ENCODE measurements at regions of chr7 and their contacts with region 1.

Region 1: GRCh38 chr7:75795831-75796285 is 17.7 kb downstream of the CCL24 start:
- DNase-seq: no peak
- ATAC-seq: no peak
- H3K4me3 Mint-ChIP-seq: no peak overlapping the region
- H3K27ac Mint-ChIP-seq: no peak overlapping the region
- H3K4me1 Mint-ChIP-seq: no peaks in the 10 kb centered on the region
- H3K27me3 Mint-ChIP-seq: peaks cover 2% of the 10 kb centered on the region

Region 2: DNA sequence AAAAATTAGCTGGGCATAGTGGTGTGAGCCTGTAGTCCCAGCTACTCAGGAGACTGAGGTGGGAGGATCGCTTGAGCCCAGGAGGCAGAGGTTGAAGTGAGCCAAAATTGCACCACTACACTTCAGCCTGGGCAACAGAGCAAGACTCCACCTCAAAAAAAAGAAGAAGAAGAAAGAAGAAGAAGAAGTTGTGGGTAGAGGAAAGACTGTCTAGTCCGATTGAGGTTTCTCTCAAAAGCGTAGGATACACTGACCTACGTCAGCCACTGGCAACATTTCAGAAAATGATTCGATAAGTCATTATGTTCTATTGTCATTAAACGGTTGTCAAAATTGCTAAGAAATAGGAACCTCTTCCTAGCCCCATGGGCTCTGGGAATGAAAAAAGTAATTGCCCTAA is 60.7 kb after region 1 on chr7:
- CTCF ChIA-PET with region 1: no interaction called
- POLR2A ChIA-PET with region 1: no interaction called
- intact Hi-C with region 1: loop called in 1 of 2 experiments (anchors 5 kb)
- DNase-seq: no peak
- ATAC-seq: no peak
- H3K4me3 Mint-ChIP-seq: no peak overlapping the region
- H3K27ac Mint-ChIP-seq: no peak overlapping the region
- H3K4me1 Mint-ChIP-seq: peaks cover 7% of the 10 kb centered on the region
- H3K27me3 Mint-ChIP-seq: peaks cover 2% of the 10 kb centered on the region

Measured in activated CD4-positive, alpha-beta T cell treated with anti-CD3 and anti-CD28 coated beads for 36 hours (primary cell).